CD8-positive, alpha-beta memory T cell (primary cell): ENCODE measurements at regions of chr22 and their contacts with region 1.

Region 1: DNA sequence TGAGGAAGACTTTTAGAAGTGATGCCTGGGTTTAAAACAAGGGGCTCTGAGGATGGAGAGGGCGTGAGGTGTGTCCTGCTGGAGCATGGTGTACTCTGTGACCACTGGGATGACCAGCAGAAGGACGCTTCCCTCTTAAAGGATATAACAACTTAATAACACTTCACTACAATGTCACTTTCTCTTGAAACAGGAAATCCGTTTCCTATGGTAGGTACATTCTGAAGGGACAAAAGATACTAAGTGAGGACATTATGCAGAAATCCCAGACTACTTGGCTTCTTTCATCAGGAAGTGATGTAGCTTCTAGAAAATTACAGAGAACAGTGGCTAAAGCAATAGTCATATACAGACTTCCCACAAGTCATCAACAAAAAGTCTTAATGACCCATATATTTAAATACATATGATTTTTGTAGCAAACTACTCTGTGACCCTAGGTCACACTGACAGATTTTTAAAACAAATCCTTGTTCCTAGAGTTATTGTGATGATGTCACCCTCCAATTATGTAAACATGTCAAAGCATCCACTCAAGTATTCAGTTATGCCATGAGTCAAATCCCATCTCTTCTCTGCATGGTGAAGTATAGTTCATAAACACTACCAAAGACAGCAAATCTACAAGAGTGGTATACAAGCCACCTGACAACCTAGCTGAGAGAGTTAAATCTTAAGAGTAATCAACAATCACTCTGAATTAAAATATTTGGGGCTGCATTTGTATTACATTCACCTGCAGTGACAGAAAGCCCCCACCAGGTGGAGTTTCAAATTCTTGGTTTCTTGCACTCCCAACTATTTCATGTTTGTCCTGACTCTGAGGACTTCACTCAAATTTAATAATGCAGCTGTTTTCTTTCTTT is 32.8 kb downstream of the PITPNB start:
- DNase-seq: peak; percentile 6 to 58 (median 19)
- H3K4me3 ChIP-seq: no peak overlapping the region
- H3K4me3 Mint-ChIP-seq: no peak overlapping the region
- H3K27ac ChIP-seq: no peak overlapping the region
- H3K27ac Mint-ChIP-seq: peak overlapping the region in 2 of 8 donors; percentile 11 to 43
- H3K4me1 ChIP-seq: no peaks in the 10 kb centered on the region
- H3K4me1 Mint-ChIP-seq: peaks cover 0 to 10% (median 7%) of the 10 kb centered on the region in 3 donors
- H3K27me3 ChIP-seq: no peaks in the 10 kb centered on the region
- H3K27me3 Mint-ChIP-seq: no peaks in the 10 kb centered on the region

Region 2: GRCh38 chr22:27804470-27805297 is 81.5 kb before region 1 on chr22:
- CTCF ChIA-PET with region 1: no interaction called
- POLR2A ChIA-PET with region 1: no interaction called
- DNase-seq: peak in 3 of 5 donors; percentile 16 to 57 (median 36)
- H3K4me3 ChIP-seq: no peak overlapping the region
- H3K4me3 Mint-ChIP-seq: peak overlapping the region in 6 of 7 donors; percentile 64 to 89 (median 68)
- H3K27ac ChIP-seq: no peak overlapping the region
- H3K27ac Mint-ChIP-seq: no peak overlapping the region
- H3K4me1 ChIP-seq: peaks cover 9% of the 10 kb centered on the region
- H3K4me1 Mint-ChIP-seq: peaks cover 17 to 24% (median 21%) of the 10 kb centered on the region in 3 donors
- H3K27me3 ChIP-seq: peaks cover 19% of the 10 kb centered on the region
- H3K27me3 Mint-ChIP-seq: peaks cover 19 to 40% of the 10 kb centered on the region in 2 donors

Region 3: DNA sequence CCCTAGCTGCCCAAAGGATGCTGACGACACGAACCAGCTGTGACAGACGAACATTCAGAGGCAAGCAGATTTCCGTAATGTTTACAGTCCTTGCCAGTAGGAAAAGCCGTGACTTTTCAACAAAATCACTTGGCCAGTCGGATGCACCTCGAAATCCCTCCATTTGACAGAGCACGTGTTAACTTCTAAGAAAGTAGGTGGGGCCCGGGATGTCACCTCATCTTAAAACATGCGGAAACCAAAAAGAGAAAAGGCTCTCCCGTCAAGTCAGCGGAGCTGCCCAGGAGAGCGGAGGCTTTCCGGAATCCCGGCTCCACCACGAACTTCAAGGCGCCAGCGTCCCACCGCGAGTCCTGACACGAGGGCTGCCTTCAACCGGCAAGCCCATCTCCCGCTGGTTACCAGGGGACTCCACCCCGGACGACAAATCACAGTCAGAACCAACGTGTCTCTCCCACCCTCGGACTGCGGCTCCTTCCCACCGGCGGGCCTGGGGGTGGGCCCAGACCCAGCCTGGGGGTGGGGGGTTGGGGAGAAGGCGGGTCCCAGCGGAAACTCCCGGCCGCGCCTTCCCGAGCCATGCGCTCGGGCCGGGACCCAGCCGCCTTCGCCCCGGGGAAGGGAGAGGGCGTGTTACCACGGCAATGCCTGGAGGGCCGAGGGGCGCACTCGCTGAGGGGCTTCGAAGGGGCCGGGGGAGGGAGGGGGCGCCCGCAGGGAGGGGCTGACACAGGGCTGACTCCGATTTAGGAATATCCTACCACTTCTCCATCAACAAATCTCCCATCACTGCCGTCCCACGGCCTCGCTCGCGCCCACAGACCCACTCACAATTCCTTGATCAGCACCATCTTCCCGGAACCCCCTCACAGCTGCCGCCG is 32.4 kb after region 1 on chr22:
- CTCF ChIA-PET with region 1: interaction called, 11 read pairs
- POLR2A ChIA-PET with region 1: no interaction called
- DNase-seq: peak in 4 of 5 donors; percentile 28 to 61 (median 48)
- H3K4me3 ChIP-seq: peak overlapping the region; percentile 70
- H3K4me3 Mint-ChIP-seq: peak overlapping the region; percentile 97 to 100 (median 99)
- H3K27ac ChIP-seq: peak overlapping the region; percentile 89
- H3K27ac Mint-ChIP-seq: peak overlapping the region; percentile 96 to 99 (median 98)
- H3K4me1 ChIP-seq: peaks cover 27% of the 10 kb centered on the region
- H3K4me1 Mint-ChIP-seq: peaks cover 60 to 86% (median 77%) of the 10 kb centered on the region in 3 donors
- H3K27me3 ChIP-seq: no peaks in the 10 kb centered on the region
- H3K27me3 Mint-ChIP-seq: peaks cover 0 to 6% of the 10 kb centered on the region in 2 donors

Region 4: GRCh38 chr22:27937453-27937852 is 51.2 kb after region 1 on chr22:
- CTCF ChIA-PET with region 1: no interaction called
- POLR2A ChIA-PET with region 1: no interaction called
- DNase-seq: no peak
- H3K4me3 ChIP-seq: no peak overlapping the region
- H3K4me3 Mint-ChIP-seq: no peak overlapping the region
- H3K27ac ChIP-seq: no peak overlapping the region
- H3K27ac Mint-ChIP-seq: no peak overlapping the region
- H3K4me1 ChIP-seq: no peaks in the 10 kb centered on the region
- H3K4me1 Mint-ChIP-seq: no peaks in the 10 kb centered on the region
- H3K27me3 ChIP-seq: no peaks in the 10 kb centered on the region
- H3K27me3 Mint-ChIP-seq: no peaks in the 10 kb centered on the region

Region 5: GRCh38 chr22:28009272-28009827 is 123.1 kb after region 1 on chr22:
- CTCF ChIA-PET with region 1: interaction called, 29 read pairs
- POLR2A ChIA-PET with region 1: no interaction called
- DNase-seq: peak; percentile 50 to 79 (median 50)
- H3K4me3 ChIP-seq: no peak overlapping the region
- H3K4me3 Mint-ChIP-seq: no peak overlapping the region
- H3K27ac ChIP-seq: no peak overlapping the region
- H3K27ac Mint-ChIP-seq: no peak overlapping the region
- H3K4me1 ChIP-seq: no peaks in the 10 kb centered on the region
- H3K4me1 Mint-ChIP-seq: no peaks in the 10 kb centered on the region
- H3K27me3 ChIP-seq: no peaks in the 10 kb centered on the region
- H3K27me3 Mint-ChIP-seq: peaks cover 0 to 2% of the 10 kb centered on the region in 2 donors